ENCODE measurements at regions of chr16 and their contacts with region 1.

Region 1: DNA sequence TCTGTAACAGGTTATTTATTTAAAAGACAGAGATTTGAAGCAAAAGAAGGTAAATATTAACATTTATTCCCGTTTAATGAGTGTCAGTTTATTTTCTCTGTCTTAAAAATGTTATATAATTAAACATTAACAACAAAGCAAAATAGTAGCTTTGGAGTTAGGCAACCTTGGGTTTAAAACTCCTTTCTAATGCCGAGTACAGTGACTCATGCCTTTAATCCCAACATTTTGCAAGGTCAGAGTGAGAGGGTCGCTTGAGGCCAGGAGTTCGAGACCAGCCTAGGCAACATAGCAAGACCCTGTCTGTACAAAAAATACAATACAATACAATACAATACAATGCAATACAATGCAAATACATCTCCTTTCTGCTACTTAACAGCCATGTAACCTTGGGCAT is 128.7 kb downstream of the CHD9 start:
- DNase-seq: no peak
- ATAC-seq: no peak
- H3K4me3 ChIP-seq: no peak overlapping the region
- H3K4me3 Mint-ChIP-seq: no peak overlapping the region
- H3K27ac ChIP-seq: no peak overlapping the region
- H3K27ac Mint-ChIP-seq: no peak overlapping the region
- H3K4me1 ChIP-seq: no peaks in the 10 kb centered on the region
- H3K4me1 Mint-ChIP-seq: no peaks in the 10 kb centered on the region
- H3K27me3 ChIP-seq: no peaks in the 10 kb centered on the region
- H3K27me3 Mint-ChIP-seq: no peaks in the 10 kb centered on the region

Region 2: GRCh38 chr16:52993179-52993578 is 190.3 kb before region 1 on chr16:
- CTCF ChIA-PET with region 1: no interaction called
- POLR2A ChIA-PET with region 1: no interaction called
- DNase-seq: no peak
- ATAC-seq: no peak
- H3K4me3 ChIP-seq: no peak overlapping the region
- H3K4me3 Mint-ChIP-seq: no peak overlapping the region
- H3K27ac ChIP-seq: no peak overlapping the region
- H3K27ac Mint-ChIP-seq: no peak overlapping the region
- H3K4me1 ChIP-seq: no peaks in the 10 kb centered on the region
- H3K4me1 Mint-ChIP-seq: no peaks in the 10 kb centered on the region
- H3K27me3 ChIP-seq: peaks cover 0 to 3% of the 10 kb centered on the region in 2 experiments
- H3K27me3 Mint-ChIP-seq: peaks cover 2 to 14% of the 10 kb centered on the region in 2 donors

Region 3: GRCh38 chr16:53131363-53132071 is 51.9 kb before region 1 on chr16:
- CTCF ChIA-PET with region 1: no interaction called
- POLR2A ChIA-PET with region 1: interaction called in 1 of 2 experiments, 10 read pairs
- DNase-seq: peak in 34 of 35 experiments; percentile 1 to 70 (median 28)
- ATAC-seq: peak; percentile 24 to 31 (median 27)
- H3K4me3 ChIP-seq: peak overlapping the region; percentile 62 to 84
- H3K4me3 Mint-ChIP-seq: peak overlapping the region; percentile 88 to 89 (median 89)
- H3K27ac ChIP-seq: no peak overlapping the region
- H3K27ac Mint-ChIP-seq: peak overlapping the region; percentile 80 to 83
- H3K4me1 ChIP-seq: peaks cover 0 to 10% of the 10 kb centered on the region in 2 experiments
- H3K4me1 Mint-ChIP-seq: peaks cover 15 to 26% (median 15%) of the 10 kb centered on the region in 3 donors
- H3K27me3 ChIP-seq: no peaks in the 10 kb centered on the region
- H3K27me3 Mint-ChIP-seq: no peaks in the 10 kb centered on the region

Region 4: DNA sequence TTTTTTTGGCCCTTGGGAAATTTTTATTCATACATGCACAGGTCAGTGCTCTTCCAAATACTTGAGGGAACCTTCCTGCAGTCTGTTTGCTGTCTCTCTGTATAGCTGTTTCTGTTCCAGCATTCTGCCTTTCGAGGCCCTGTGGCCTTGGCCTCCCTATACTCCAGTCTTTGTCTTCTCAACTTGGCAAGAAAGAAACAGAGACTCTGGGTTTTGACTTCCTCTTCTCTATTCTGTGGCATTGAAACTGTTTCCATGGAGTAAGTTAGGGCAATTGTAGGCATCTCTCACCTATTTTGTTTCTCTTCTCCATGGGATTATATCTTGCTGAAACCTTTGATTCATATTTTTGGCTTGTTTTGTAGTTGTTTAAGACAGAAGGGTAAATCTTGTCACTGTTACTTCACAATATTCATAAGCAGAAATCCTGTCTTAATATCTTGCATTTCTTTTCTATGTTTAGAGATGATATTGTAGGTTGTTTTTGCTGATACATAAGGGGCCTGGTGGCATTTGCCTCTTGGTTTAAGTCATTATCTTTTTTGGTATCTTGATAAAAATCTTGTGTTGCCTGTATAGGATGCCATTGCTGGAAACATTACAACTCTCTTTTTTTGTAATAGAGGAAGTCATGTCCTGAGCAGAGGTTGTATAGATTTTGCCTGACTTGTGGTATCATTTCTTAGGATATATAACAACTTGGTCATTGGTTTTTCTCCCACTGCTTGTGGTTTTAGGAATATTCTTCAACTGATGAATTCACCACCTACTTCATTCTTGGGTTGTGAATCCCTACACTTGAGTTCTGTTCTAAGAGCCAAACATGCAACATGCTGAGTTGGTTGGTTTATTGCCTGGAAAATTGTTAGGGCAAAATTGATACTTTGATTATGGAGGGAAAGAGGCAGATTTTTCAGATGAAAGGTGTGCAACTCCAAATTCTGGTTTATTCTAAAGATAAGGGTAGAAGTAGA is 689.1 kb after region 1 on chr16:
- CTCF ChIA-PET with region 1: no interaction called
- POLR2A ChIA-PET with region 1: interaction called in 1 of 2 experiments, 10 read pairs
- DNase-seq: no peak
- ATAC-seq: no peak
- H3K4me3 ChIP-seq: no peak overlapping the region
- H3K4me3 Mint-ChIP-seq: no peak overlapping the region
- H3K27ac ChIP-seq: no peak overlapping the region
- H3K27ac Mint-ChIP-seq: no peak overlapping the region
- H3K4me1 ChIP-seq: no peaks in the 10 kb centered on the region
- H3K4me1 Mint-ChIP-seq: peaks cover 4 to 9% (median 6%) of the 10 kb centered on the region in 3 donors
- H3K27me3 ChIP-seq: no peaks in the 10 kb centered on the region
- H3K27me3 Mint-ChIP-seq: no peaks in the 10 kb centered on the region

Measured in T-cell (primary cell).